Sigmoid colon (tissue), 7 donors: ENCODE measurements at regions of chr19 and their contacts with region 1.

Region 1: GRCh38 chr19:17938092-17938845 is 5.5 kb downstream of the CCDC124 start:
- DNase-seq: peak; percentile 82
- H3K4me3 ChIP-seq: no peak overlapping the region
- H3K27ac ChIP-seq: no peak overlapping the region
- H3K4me1 ChIP-seq: peaks cover 0 to 12% (median 11%) of the 10 kb centered on the region in 4 donors
- H3K27me3 ChIP-seq: no peaks in the 10 kb centered on the region
- CTCF ChIP-seq: peak; percentile 82 to 93 (median 90)
- EP300 ChIP-seq: no peak
- POLR2A ChIP-seq: no peak

Region 2: GRCh38 chr19:17889609-17890214 is 48.6 kb before region 1 on chr19:
- intact Hi-C with region 1: no loop called
- DNase-seq: no peak
- H3K4me3 ChIP-seq: no peak overlapping the region
- H3K27ac ChIP-seq: no peak overlapping the region
- H3K4me1 ChIP-seq: no peaks in the 10 kb centered on the region
- H3K27me3 ChIP-seq: peaks cover 4 to 32% (median 6%) of the 10 kb centered on the region in 3 donors
- CTCF ChIP-seq: no peak
- EP300 ChIP-seq: no peak
- POLR2A ChIP-seq: no peak

Region 3: GRCh38 chr19:17996826-17997316 is 58.6 kb after region 1 on chr19:
- intact Hi-C with region 1: loop called (anchors 1 kb)
- DNase-seq: peak; percentile 92
- H3K4me3 ChIP-seq: no peak overlapping the region
- H3K27ac ChIP-seq: no peak overlapping the region
- H3K4me1 ChIP-seq: peaks cover 0 to 12% (median 11%) of the 10 kb centered on the region in 4 donors
- H3K27me3 ChIP-seq: no peaks in the 10 kb centered on the region
- CTCF ChIP-seq: peak; percentile 96 to 98 (median 97)
- EP300 ChIP-seq: no peak
- POLR2A ChIP-seq: no peak

Region 4: GRCh38 chr19:18058208-18059030 is 120.2 kb after region 1 on chr19:
- intact Hi-C with region 1: loop called (anchors 5 kb)
- DNase-seq: peak; percentile 89
- H3K4me3 ChIP-seq: peak overlapping the region in 3 of 4 donors; percentile 1 to 15 (median 13)
- H3K27ac ChIP-seq: peak overlapping the region; percentile 73 to 90 (median 82)
- H3K4me1 ChIP-seq: peaks cover 0 to 15% (median 13%) of the 10 kb centered on the region in 4 donors
- H3K27me3 ChIP-seq: no peaks in the 10 kb centered on the region
- CTCF ChIP-seq: peak; percentile 96 to 98 (median 97)
- EP300 ChIP-seq: no peak
- POLR2A ChIP-seq: no peak